ENCODE measurements at regions of chr10 and their contacts with region 1.

Region 1: DNA sequence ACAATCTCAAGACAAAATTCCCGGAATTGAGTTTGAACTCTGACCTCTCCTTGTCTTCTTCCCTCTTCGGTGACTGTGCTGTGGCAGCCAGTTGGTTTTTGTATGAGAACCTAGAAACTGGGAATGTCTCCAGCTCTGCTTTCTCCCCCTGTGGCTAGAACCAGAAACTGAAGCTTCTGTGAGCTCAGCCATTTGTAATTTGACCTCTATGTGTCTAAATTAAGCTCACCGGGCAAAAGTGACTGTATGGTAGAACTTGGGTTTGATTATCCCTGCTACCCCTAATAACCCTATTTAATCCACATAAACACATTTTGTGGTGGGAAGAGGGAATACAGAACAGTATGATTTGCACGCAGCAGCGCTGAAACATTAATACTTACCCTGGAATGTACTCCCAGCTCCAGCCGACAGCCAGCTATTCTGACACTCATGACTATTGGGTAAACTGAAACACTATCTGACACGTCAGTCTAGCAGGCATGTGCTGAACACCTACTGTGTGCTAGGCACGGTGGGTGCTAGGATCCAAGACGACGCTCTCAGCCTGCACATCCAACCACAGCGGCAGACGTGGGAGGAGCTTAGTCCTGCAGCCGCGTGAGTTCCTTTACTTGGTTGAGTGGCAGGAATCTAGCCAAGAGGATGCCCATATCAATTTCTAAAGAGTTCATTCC is 324.8 kb downstream of the SFMBT2 start:
- DNase-seq: peak in 1 of 10 donors; percentile 27
- H3K4me3 ChIP-seq: peak overlapping the region in 52 of 59 donors; percentile 1 to 58 (median 34)
- H3K27ac ChIP-seq: peak overlapping the region; percentile 33 to 97 (median 91)
- H3K27me3 ChIP-seq: no peaks in the 10 kb centered on the region
- CTCF ChIP-seq: peak in 24 of 56 donors; percentile 5 to 45 (median 28)

Region 2: DNA sequence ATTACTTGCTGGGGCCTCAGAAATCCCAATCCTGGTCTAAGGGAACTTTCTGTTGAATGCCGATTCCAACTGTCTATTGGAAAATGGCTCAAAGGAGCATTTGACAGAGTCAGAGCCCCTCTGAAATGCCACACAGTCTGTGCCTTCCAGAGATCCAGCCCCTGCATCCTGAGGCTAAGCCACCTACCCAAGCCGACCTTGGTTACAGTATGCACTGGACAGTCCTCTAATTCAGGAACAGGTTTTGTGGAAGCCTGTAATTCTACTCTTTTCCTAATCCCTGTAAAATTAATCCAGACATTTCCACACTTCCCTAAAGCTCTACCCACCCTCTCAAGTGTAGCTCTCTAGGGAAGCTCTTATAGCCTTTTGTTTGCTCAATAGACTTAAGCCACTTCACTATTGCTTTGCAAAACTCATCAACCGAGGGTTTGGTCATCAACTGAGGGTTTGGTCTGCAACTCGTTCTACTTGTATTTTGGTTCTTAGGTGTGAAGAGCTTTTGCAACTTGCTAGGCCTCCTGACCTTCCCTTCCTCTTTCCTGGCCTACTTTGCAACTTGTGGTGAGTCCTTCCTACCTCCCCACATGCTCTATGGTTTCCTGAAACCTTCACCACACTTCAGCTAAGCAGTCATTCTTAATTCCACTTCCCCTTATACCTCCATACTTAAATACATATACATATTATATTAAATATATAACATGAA is 40.0 kb before region 1 on chr10:
- intact Hi-C with region 1: no loop called
- DNase-seq: no peak
- H3K4me3 ChIP-seq: no peak overlapping the region
- H3K27ac ChIP-seq: no peak overlapping the region
- H3K27me3 ChIP-seq: no peaks in the 10 kb centered on the region
- CTCF ChIP-seq: no peak

Region 3: DNA sequence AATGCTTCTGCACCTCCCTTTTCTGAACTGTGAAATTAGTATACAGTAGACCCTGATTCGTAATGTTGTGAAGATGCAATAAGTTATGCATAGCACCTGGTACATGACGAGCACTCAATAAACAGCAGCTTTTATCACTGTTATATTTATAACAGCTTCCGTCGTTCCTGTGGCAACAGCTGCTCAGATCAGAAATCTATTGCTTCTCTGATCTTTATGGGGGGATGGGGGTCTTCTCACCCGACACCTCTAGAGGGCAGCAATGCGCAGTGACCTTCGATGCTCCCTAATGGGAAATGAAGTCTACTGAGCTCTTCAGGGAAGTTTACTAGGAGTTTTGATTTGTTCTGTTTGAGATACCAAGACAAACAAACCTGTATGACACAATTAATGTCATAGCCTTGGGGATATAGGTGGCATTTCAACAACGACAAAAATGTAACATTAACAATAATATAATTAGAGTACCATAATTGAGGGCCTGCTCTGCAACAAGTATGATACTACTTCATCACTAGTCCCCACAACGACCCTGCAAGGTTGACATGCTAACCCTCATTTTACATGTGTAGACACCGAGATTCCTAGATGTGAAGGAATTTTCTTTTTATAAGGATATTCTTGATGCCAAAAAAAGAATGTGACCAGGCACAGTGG is 35.2 kb after region 1 on chr10:
- intact Hi-C with region 1: loop called in 1 of 2 experiments (anchors 2 kb)
- DNase-seq: peak in 7 of 10 donors; percentile 32 to 67 (median 56)
- H3K4me3 ChIP-seq: no peak overlapping the region
- H3K27ac ChIP-seq: no peak overlapping the region
- H3K27me3 ChIP-seq: peaks cover 0 to 6% (median 0%) of the 10 kb centered on the region in 45 donors
- CTCF ChIP-seq: peak; percentile 39 to 85 (median 68)